Heart left ventricle (tissue), 16 donors: ENCODE measurements at regions of chr4 and their contacts with region 1.

Region 1: DNA sequence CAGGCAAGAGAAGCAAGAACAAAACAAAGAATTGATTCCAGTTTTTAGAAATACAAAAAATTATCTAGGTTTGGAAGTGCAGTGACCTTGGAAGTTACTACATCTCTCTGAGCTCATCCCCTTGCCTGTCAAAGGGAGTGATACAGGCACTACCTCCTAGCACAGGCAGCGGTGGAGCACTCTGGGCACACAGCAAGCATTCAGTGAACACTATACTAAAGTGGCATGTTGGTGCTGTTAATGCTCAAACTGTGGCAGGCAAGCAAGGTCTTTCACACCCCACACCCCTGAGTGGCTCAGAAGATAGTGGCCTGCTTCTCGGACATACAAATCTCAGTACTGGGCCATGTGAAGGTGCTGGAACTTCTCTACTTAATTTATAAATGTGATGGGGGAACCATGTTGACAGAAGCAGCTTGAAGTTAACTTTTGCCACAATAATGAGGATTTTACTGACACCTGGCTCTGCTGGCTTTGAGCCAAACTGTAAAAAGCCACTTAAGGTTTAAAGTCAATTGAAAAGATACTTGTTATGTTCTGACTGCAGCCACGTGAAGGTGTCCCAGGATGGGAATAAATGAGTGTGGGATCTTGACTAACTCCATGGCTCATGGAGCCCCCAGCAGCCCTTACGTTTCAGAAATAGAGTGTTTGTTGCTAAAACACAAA is 51.3 kb downstream of the DRD5 start:
- DNase-seq: no peak
- ATAC-seq: peak in 3 of 4 donors; percentile 26 to 65 (median 33)
- H3K4me3 ChIP-seq: no peak overlapping the region
- H3K27ac ChIP-seq: no peak overlapping the region
- H3K4me1 ChIP-seq: no peaks in the 10 kb centered on the region
- H3K27me3 ChIP-seq: no peaks in the 10 kb centered on the region
- CTCF ChIP-seq: no peak
- POLR2A ChIP-seq: no peak

Region 2: GRCh38 chr4:9608300-9608699 is 224.5 kb before region 1 on chr4:
- intact Hi-C with region 1: no loop called
- DNase-seq: no peak
- ATAC-seq: no peak
- H3K4me3 ChIP-seq: no peak overlapping the region
- H3K27ac ChIP-seq: no peak overlapping the region
- H3K4me1 ChIP-seq: peaks cover 0 to 7% (median 0%) of the 10 kb centered on the region in 12 donors
- H3K27me3 ChIP-seq: no peaks in the 10 kb centered on the region
- CTCF ChIP-seq: no peak
- POLR2A ChIP-seq: no peak

Region 3: DNA sequence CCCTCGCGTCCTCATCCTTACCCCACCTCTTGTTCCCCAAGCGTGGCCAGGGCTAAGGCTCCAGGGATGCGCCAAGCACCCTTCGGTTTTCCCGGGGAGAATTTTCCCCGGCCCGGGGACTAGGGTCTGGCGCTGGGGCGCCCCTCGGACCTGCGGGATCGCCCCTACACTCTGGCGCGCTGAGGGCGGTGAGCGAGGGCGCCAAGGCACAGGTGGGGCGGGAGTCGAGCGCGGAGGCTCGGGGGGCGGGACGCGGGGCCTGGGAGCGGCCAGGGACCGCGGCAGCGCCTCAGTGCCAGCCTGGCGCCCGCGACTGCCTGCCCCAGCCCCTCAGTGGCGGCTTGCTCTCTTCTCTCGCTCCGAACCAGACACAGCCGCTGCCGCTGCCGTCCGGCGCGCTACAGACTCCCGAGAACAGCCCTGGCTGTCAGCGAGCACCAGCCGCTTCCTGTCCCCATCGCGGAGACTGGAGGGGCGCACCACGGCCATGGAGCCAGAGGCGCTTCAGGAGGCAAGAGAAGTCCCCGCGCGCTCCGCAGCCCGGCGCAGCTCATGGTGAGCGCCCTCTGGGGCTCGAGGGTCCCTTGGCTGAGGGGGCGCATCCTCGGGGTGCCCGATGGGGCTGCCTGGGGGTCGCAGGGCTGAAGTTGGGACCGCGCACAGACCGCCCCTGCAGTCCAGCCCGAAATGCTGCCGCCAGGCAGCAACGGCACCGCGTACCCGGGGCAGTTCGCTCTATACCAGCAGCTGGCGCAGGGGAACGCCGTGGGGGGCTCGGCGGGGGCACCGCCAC is 51.2 kb before region 1 on chr4 and contains the start of gene DRD5:
- intact Hi-C with region 1: loop called in 1 of 10 experiments (anchors 10 kb)
- DNase-seq: no peak
- ATAC-seq: no peak
- H3K4me3 ChIP-seq: peak within 1 kb of the TSS in 2 of 12 donors; percentile 12 to 20
- H3K27ac ChIP-seq: no peak within 1 kb of the TSS
- H3K4me1 ChIP-seq: no peaks in the 10 kb centered on the region
- H3K27me3 ChIP-seq: peaks cover 17 to 49% (median 31%) of the 10 kb centered on the region in 9 donors
- CTCF ChIP-seq: no peak
- POLR2A ChIP-seq: no peak
- total RNA-seq, gene DRD5: 0.25 to 0.36 TPM in 2 of 9 donors, not detected in the others

Region 4: GRCh38 chr4:9952415-9952950 is 119.7 kb after region 1 on chr4:
- intact Hi-C with region 1: no loop called
- DNase-seq: no peak
- ATAC-seq: no peak
- H3K4me3 ChIP-seq: no peak overlapping the region
- H3K27ac ChIP-seq: no peak overlapping the region
- H3K4me1 ChIP-seq: peaks cover 0 to 6% (median 0%) of the 10 kb centered on the region in 12 donors
- H3K27me3 ChIP-seq: no peaks in the 10 kb centered on the region
- CTCF ChIP-seq: no peak
- POLR2A ChIP-seq: no peak